ENCODE measurements at regions of chr21 and their contacts with region 1.

Region 1: GRCh38 chr21:36113647-36114428 is 21.0 kb upstream of the CBR3 start:
- DNase-seq: no peak
- ATAC-seq: no peak
- H3K4me3 Mint-ChIP-seq: peak overlapping the region; percentile 75
- H3K27ac Mint-ChIP-seq: peak overlapping the region; percentile 80
- H3K4me1 Mint-ChIP-seq: peaks cover 30% of the 10 kb centered on the region
- H3K27me3 Mint-ChIP-seq: no peaks in the 10 kb centered on the region
- CTCF ChIP-seq: no peak

Region 2: GRCh38 chr21:35932232-35932911 is 181.5 kb before region 1 on chr21:
- CTCF ChIA-PET with region 1: no interaction called
- POLR2A ChIA-PET with region 1: no interaction called
- intact Hi-C with region 1: loop called (anchors 10 kb)
- DNase-seq: no peak
- ATAC-seq: peak; percentile 93
- H3K4me3 Mint-ChIP-seq: no peak overlapping the region
- H3K27ac Mint-ChIP-seq: no peak overlapping the region
- H3K4me1 Mint-ChIP-seq: no peaks in the 10 kb centered on the region
- H3K27me3 Mint-ChIP-seq: no peaks in the 10 kb centered on the region
- CTCF ChIP-seq: no peak

Region 3: DNA sequence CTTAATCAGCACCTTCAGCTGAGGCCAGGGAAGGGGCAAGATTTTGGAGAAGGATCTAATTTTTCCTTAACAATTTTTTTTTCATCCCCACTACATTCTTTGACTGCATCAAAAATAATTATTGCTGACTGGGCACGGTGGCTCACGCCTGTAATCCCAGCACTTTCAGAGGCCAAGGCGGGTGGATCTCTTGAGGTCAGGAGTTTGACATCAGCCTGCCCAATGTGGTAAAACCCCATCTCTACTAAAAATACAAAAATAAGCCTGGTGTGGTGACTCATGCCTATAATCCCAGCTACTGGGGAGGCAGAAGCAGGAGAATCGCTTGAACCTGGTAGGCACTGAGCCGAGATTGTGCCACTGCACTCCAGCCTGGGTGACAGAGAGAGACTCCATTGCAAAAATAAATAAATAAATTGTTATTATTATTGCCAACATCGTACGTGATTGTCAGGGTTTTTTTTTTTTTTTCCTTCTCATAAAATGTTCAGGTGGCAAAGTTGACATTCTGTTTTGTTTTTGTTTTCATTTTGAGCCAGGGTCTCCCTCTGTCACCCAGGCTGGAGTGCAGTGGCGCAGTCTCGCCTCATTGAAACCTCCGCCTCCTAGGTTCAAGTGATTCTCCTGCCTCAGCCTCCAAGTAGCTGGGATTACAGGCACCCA is 168.9 kb after region 1 on chr21:
- CTCF ChIA-PET with region 1: no interaction called
- POLR2A ChIA-PET with region 1: no interaction called
- intact Hi-C with region 1: no loop called
- DNase-seq: no peak
- ATAC-seq: no peak
- H3K4me3 Mint-ChIP-seq: no peak overlapping the region
- H3K27ac Mint-ChIP-seq: peak overlapping the region; percentile 63
- H3K4me1 Mint-ChIP-seq: peaks cover 20% of the 10 kb centered on the region
- H3K27me3 Mint-ChIP-seq: no peaks in the 10 kb centered on the region
- CTCF ChIP-seq: no peak